ENCODE measurements at regions of chr19 and their contacts with region 1.

Region 1: GRCh38 chr19:10315335-10316214 is at the start of gene FDX2:
- DNase-seq: peak; percentile 51
- ATAC-seq: peak; percentile 97
- H3K4me3 ChIP-seq: peak within 1 kb of the TSS; percentile 88
- H3K27ac ChIP-seq: peak within 1 kb of the TSS; percentile 46
- H3K4me1 ChIP-seq: peaks cover 5% of the 10 kb centered on the region
- H3K27me3 ChIP-seq: no peaks in the 10 kb centered on the region
- CTCF ChIP-seq: no peak
- EP300 ChIP-seq: no peak
- POLR2A ChIP-seq: peak; percentile 91
- RAD21 ChIP-seq: no peak
- polyA plus RNA-seq, gene FDX2: 1.4 to 4.1 TPM

Region 2: DNA sequence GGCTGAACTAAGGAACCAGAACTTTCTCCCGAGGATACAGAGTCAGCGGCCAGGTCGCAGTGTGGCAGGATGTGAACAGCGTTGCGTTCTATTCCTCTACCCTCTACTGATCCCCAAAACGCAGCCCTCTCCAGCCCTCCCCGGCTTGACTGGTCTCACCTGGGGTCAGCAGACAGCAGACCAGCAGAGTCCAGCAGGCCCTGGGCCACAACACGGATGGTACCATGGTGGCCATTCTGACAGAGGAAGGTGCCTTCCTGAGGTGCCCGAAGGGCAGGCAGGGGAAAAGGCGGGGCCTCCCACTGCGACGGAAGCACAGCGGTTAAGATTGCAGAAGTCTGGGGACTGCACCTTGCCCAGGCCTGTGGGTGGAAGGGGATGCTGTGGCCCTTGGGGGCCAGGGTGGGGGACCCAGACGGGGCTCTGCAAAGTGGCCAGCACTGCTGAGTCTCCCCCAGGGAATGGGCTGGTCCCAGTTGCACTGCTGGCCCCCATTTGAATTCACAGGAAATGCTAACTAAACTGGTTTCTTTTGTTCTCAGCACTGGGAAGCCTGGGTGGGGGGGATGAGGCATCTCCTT is 23.9 kb after region 1 on chr19 and contains the start of gene ICAM3:
- CTCF ChIA-PET with region 1: interaction called, 4 read pairs
- POLR2A ChIA-PET with region 1: interaction called, 11 read pairs
- RAD21 ChIA-PET with region 1: no interaction called
- SMC1A ChIA-PET with region 1: no interaction called
- in situ Hi-C with region 1: no loop called
- intact Hi-C with region 1: no loop called
- DNase-seq: peak; percentile 43
- ATAC-seq: peak; percentile 97
- H3K4me3 ChIP-seq: peak within 1 kb of the TSS; percentile 90
- H3K27ac ChIP-seq: peak within 1 kb of the TSS; percentile 85
- H3K4me1 ChIP-seq: peaks cover 12% of the 10 kb centered on the region
- H3K27me3 ChIP-seq: no peaks in the 10 kb centered on the region
- CTCF ChIP-seq: no peak
- EP300 ChIP-seq: no peak
- POLR2A ChIP-seq: peak; percentile 85
- RAD21 ChIP-seq: no peak
- polyA plus RNA-seq, gene ICAM3: 5.5 to 29.2 TPM